ENCODE measurements at regions of chr7 and their contacts with region 1.

Region 1: DNA sequence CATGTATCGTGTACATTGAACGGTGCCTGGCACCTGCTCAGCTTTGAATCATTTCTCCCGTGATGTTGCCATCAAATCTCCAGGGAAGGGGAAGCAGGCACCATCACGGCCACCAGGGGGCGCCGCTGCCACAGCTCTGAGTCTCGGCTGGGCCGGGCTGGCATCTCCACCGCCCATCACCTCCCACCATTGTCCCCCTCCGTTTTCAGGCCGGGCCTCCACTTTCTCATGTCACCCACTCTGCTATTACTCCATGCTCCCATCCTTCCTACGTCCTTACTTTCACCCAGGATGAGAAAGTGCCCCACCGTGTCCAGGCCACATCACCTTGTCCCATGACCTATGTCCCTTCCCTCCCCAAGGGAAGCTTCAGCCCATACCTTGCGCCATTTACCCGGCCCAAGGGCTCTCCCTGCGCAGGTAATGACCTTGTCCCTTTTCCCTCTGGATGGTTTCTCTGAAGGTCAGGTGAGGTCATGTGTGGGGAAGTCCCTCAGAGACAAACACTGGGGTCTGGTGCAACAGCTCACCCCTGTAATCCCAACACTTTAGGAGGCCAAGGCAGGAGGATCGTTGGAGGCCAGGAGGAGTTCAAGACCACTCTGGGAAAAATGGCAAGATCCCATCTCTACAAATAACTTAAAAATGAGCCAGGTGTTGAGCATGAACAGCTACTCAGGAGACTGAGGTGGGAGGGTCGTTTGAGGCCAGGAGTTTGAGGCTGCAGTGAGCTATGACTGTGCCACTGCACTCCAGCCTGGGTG is 31.8 kb upstream of the OCM2 start:
- DNase-seq: peak; percentile 83
- H3K4me3 Mint-ChIP-seq: no peak overlapping the region
- H3K27ac Mint-ChIP-seq: no peak overlapping the region
- H3K4me1 Mint-ChIP-seq: no peaks in the 10 kb centered on the region
- H3K27me3 Mint-ChIP-seq: no peaks in the 10 kb centered on the region
- CTCF ChIP-seq: peak; percentile 76

Region 2: GRCh38 chr7:97851683-97852082 is 170.1 kb before region 1 on chr7:
- CTCF ChIA-PET with region 1: no interaction called
- intact Hi-C with region 1: no loop called
- DNase-seq: no peak
- H3K4me3 Mint-ChIP-seq: no peak overlapping the region
- H3K27ac Mint-ChIP-seq: no peak overlapping the region
- H3K4me1 Mint-ChIP-seq: no peaks in the 10 kb centered on the region
- H3K27me3 Mint-ChIP-seq: no peaks in the 10 kb centered on the region
- CTCF ChIP-seq: no peak

Region 3: GRCh38 chr7:97971120-97971989 is 50.4 kb before region 1 on chr7:
- CTCF ChIA-PET with region 1: interaction called, 11 read pairs
- intact Hi-C with region 1: no loop called
- DNase-seq: peak; percentile 6
- H3K4me3 Mint-ChIP-seq: peak overlapping the region; percentile 86
- H3K27ac Mint-ChIP-seq: peak overlapping the region; percentile 83
- H3K4me1 Mint-ChIP-seq: peaks cover 7% of the 10 kb centered on the region
- H3K27me3 Mint-ChIP-seq: no peaks in the 10 kb centered on the region
- CTCF ChIP-seq: no peak

Region 4: GRCh38 chr7:98000356-98000755 is 21.4 kb before region 1 on chr7:
- CTCF ChIA-PET with region 1: no interaction called
- intact Hi-C with region 1: no loop called
- DNase-seq: no peak
- H3K4me3 Mint-ChIP-seq: no peak overlapping the region
- H3K27ac Mint-ChIP-seq: no peak overlapping the region
- H3K4me1 Mint-ChIP-seq: no peaks in the 10 kb centered on the region
- H3K27me3 Mint-ChIP-seq: peaks cover 44% of the 10 kb centered on the region
- CTCF ChIP-seq: no peak

Region 5: DNA sequence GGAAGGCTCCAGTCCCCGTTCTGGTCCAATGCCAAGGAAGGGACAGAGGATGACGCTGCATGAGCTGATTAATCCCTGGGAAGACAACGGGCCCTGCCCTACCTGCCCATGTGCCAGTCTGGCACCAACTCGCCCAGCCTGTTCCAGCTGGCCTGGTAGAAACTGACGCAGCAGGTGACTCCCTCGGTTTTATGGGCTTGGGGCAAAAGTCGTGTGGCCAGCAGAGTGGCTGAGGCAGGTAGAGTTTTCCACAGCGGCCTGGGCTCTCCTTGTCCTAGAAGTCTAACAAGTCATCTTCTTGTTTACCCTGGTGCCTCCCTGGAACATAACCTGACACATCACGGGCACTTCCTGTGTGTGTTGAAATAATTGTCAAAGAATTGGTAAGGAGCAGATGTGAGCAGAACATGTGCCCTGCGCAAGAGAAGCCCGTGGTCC is 64.5 kb after region 1 on chr7:
- CTCF ChIA-PET with region 1: no interaction called
- intact Hi-C with region 1: no loop called
- DNase-seq: peak; percentile 63
- H3K4me3 Mint-ChIP-seq: no peak overlapping the region
- H3K27ac Mint-ChIP-seq: no peak overlapping the region
- H3K4me1 Mint-ChIP-seq: peaks cover 8% of the 10 kb centered on the region
- H3K27me3 Mint-ChIP-seq: no peaks in the 10 kb centered on the region
- CTCF ChIP-seq: no peak

Region 6: DNA sequence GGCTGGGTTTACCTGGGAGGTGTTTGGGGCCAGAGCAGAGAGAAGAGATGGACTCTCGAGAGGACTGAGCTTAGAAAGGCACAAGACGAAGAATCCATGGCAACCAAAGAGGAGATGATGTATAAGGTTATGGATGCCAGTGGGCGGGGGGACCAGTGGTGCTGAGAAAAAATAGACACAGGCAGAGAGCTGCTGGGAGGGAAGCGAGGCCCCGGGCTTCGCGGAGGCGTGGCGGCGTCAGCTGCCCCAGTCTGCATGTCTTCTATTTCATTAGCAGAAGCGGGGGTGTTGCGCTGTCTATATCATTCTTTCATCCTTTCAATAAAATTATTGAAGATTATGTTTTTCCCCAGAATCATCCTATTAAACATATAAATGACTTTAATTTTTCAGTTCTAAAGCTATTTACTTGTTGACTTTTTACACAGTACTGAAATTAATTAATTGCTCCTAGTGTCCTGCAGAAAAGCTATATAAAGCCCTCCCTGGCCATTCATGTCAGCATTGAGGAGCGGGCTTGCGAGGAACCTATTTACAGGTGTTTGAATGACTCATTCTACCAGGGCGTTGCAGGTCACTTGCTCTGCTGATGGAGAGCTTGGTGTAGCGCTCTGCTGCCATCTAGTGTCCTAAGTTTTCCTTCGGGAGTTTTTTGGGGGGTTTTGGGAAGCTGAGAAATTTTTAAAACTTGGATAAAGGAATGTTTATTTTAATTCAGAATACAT is 146.6 kb after region 1 on chr7:
- CTCF ChIA-PET with region 1: interaction called, 32 read pairs
- intact Hi-C with region 1: loop called (anchors 1 kb)
- DNase-seq: peak; percentile 66
- H3K4me3 Mint-ChIP-seq: no peak overlapping the region
- H3K27ac Mint-ChIP-seq: peak overlapping the region; percentile 2
- H3K4me1 Mint-ChIP-seq: no peaks in the 10 kb centered on the region
- H3K27me3 Mint-ChIP-seq: no peaks in the 10 kb centered on the region
- CTCF ChIP-seq: peak; percentile 68